ENCODE measurements at regions of chr15 and their contacts with region 1.

Region 1: GRCh38 chr15:63048115-63048775 is 5.7 kb downstream of the TPM1 start:
- DNase-seq: peak; percentile 49
- H3K4me3 ChIP-seq: peak overlapping the region; percentile 48 to 93 (median 71)
- H3K27ac ChIP-seq: peak overlapping the region; percentile 61
- H3K4me1 ChIP-seq: peaks cover 59% of the 10 kb centered on the region
- H3K27me3 ChIP-seq: no peaks in the 10 kb centered on the region
- CTCF ChIP-seq: peak; percentile 86 to 99 (median 90)

Region 2: DNA sequence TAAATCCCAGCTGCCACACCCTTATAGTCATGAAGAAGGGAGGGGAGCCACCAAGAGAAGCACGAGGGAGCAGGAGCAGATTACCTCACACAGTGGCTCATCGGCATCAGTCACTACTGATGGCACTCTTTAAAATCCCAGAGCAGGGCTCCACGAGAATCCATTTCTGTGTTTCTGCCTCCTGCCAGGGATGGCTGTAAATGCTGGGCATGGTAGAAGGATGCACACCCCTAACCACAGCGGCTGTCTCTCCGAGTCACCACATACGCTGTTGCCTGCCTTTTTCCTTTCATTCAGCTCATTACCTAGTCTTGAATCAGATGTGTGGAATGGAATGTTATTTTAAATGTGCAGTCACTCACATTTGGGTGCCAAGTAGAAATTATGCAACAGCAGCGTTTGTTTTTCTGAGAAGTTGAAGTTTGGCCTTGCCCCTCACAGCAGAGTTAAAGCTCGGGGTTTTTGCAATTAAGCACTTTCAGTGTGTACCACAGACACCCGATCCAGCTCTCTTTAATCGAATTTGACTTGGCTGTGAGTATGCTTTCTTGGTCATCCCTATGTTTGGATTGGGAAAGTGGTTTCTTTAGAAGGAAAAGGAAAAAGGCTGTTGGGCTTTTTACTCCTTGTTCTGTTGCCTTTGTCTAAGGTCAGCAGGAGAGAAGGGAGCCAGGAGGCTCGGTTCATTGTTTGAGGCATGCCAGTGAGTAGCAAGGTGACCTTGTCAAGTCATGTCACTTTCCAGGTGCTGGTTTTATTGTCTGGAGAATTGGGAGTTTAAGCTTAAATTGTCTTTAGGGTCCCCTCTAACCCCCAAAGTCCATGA is 289.9 kb before region 1 on chr15:
- dilution Hi-C with region 1: loop called (anchors 25 kb)
- DNase-seq: no peak
- H3K4me3 ChIP-seq: peak overlapping the region in 2 of 3 experiments; percentile 12 to 52
- H3K27ac ChIP-seq: peak overlapping the region; percentile 84
- H3K4me1 ChIP-seq: peaks cover 42% of the 10 kb centered on the region
- H3K27me3 ChIP-seq: no peaks in the 10 kb centered on the region
- CTCF ChIP-seq: no peak